ENCODE measurements at regions of chr12 and their contacts with region 1.

Region 1: DNA sequence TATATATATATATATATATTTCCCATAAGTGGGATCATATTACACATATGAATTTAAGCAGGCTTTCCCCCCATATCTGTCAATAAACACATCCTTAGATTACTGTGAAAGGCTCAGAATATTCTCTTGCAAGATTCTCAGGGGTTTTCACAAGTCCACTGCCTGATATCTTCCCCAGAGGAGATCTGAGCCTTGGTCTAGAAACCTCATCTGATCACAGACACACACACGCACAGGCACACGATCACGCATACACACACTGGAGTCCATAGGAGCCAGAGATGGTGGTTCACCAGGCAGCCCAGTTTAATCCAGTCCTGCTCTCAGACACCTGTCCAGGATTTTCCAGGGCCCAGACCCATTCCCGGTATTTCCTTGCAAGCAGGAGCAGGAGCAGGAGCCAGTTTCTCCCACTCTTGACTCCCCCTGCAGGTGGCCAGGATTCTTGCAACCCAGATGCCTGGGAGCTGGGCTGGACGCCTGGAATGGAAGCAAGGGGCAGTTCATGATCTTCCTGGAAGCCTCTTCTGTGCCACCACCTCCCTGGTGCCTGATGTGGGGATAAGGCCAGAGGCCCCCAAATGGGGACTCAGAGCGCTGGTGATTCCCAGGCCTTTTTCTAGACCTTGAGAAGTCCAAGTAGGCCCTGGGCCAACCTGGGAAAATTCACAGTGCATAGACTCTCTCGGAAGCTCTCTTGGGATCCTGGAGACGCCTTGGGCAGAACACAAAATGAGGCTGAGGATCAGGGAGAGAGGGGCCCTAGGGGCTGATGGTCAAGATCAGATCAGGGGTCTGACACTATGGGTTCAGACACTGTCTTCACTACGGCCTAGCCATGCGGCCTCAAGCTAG is 16.5 kb upstream of the KRT78 start:
- DNase-seq: peak; percentile 47
- H3K4me3 ChIP-seq: no peak overlapping the region
- H3K27ac ChIP-seq: no peak overlapping the region
- H3K27me3 ChIP-seq: peaks cover 3% of the 10 kb centered on the region
- CTCF ChIP-seq: peak; percentile 89

Region 2: DNA sequence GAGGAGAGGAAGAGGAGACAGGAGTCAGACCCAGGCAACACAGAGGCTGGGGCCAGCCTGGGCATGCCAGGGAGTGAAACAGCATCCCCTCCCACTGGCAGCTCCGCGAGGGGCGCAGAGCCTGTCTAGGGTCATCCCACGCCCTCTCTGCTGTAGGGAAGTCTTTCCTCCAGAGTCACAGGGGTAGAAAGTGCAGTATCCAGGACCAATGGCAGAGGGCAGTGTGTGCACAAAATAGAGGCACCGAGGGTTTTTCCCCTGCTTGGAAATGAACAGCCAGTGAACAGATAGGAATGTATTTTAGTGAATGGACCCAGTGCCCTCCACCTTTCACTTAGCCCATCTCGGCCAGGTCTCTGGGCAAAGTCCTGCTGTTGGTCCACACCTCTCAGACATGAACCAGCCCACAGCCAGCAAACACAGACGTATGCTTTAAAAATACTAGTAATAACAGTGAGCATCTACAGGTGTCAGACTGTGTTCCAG is 282.3 kb before region 1 on chr12:
- CTCF ChIA-PET with region 1: interaction called, 42 read pairs
- POLR2A ChIA-PET with region 1: no interaction called
- DNase-seq: peak; percentile 3
- H3K4me3 ChIP-seq: no peak overlapping the region
- H3K27ac ChIP-seq: no peak overlapping the region
- H3K27me3 ChIP-seq: peaks cover 37% of the 10 kb centered on the region
- CTCF ChIP-seq: peak; percentile 85

Region 3: GRCh38 chr12:52821826-52822660 is 43.3 kb before region 1 on chr12:
- CTCF ChIA-PET with region 1: no interaction called
- POLR2A ChIA-PET with region 1: no interaction called
- DNase-seq: no peak
- H3K4me3 ChIP-seq: no peak overlapping the region
- H3K27ac ChIP-seq: no peak overlapping the region
- H3K27me3 ChIP-seq: peaks cover 18% of the 10 kb centered on the region
- CTCF ChIP-seq: no peak

Measured in AG04450 (cell line).